ENCODE measurements at regions of chr6 and their contacts with region 1.

Region 1: DNA sequence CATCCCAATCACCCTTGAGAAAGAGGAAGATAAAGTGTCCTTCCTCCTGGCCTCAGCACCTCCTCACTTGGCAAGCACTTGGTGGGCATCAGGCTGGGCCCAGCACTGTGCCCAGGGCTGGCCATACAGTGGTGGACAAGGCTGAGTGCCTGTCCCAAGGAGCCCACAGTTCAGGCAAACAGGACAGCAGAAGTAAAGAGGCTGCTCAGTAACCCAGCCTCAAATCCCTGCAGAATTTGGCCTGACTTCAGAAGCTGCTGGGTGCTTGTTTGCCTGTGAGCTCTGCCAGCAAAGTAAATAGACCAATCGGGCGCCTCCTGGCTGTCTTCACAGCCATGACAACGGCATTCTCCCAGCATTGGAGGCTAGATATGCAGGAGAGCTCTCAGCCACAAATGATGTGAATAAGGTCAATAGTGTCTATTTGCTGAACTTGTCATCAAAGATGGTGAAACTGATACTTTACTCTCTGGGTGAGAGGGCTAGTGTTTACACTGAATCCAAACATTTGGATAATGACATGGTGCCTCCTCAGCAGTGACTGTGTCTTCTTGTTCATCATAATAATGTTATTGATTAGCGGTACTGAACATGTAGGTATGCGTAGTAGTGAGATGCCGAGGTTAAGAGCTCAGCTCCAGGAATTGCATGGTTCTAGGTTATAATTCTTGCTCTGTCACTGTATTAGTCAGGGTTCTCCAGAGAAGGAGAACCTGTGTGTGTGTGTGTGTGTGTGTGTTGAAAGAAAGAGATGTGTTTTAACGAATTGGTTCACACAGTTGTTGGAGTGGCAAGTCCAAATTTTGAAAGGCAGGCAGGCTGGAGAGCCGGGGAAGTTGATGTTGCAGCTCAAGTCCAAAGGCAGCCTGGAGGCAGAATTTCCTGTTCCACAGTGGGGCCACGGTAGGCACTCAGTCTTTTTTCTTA is 36.8 kb upstream of the FANCE start:
- DNase-seq: peak; percentile 40
- H3K4me3 Mint-ChIP-seq: no peak overlapping the region
- H3K27ac Mint-ChIP-seq: peak overlapping the region; percentile 52
- H3K4me1 Mint-ChIP-seq: peaks cover 49% of the 10 kb centered on the region
- H3K27me3 Mint-ChIP-seq: no peaks in the 10 kb centered on the region

Region 2: DNA sequence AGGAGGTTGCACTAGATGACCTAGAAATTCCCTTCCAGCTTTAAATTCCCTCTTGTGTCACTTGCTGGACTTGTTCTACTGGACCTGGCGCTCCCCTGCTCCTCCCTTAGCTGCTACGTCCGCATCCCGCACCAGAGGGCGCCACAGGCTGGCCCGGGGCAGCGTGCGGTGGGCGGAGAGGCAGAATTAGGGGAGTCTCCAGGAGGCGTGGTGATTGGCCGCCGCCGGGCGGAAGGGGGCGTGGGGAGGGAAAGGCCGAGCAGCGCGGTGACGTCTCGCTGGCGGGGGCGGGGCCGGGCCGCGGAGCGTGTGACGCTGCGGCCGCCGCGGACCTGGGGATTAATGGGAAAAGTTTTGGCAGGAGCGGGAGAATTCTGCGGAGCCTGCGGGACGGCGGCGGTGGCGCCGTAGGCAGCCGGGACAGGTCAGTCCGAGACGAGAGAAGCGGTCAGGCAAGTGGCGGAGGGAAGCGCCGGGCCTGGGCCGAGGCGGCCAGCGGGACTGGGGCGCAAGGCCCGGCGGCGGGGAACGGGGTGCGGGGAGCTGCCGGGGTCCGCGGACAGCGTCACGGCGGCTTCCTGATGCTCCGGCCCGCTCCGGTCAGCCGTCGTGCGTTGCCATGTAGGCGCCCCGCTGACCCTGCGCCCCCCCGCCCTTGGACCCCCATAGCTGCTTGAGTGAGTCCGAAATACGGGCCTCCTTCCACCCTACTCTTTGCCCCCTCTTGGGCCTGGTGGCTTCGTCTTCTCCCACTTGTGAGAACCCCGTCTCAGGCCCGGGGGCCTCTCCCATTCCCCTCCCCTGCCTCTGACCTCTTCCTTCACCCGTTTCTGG is 72.9 kb before region 1 on chr6 and contains the start of gene PPARD:
- CTCF ChIA-PET with region 1: interaction called, 13 read pairs
- POLR2A ChIA-PET with region 1: interaction called, 5 read pairs
- DNase-seq: peak; percentile 98
- H3K4me3 Mint-ChIP-seq: peak within 1 kb of the TSS; percentile 96
- H3K27ac Mint-ChIP-seq: peak within 1 kb of the TSS; percentile 79
- H3K4me1 Mint-ChIP-seq: peaks cover 45% of the 10 kb centered on the region
- H3K27me3 Mint-ChIP-seq: peaks cover 7% of the 10 kb centered on the region
- total RNA-seq, gene PPARD: 23.1 to 23.4 TPM